ENCODE measurements at regions of chr10 and their contacts with region 1.

Region 1: GRCh38 chr10:113300617-113301016 is 252.2 kb upstream of the HABP2 start:
- DNase-seq: no peak
- H3K4me3 ChIP-seq: no peak overlapping the region
- H3K27ac ChIP-seq: no peak overlapping the region
- H3K4me1 ChIP-seq: no peaks in the 10 kb centered on the region; a peak in 1 of 7 replicates
- H3K27me3 ChIP-seq: no peaks in the 10 kb centered on the region
- CTCF ChIP-seq: no peak
- EP300 ChIP-seq: no peak
- POLR2A ChIP-seq: no peak
- RAD21 ChIP-seq: no peak

Region 2: GRCh38 chr10:113216102-113216501 is 84.5 kb before region 1 on chr10:
- CTCF ChIA-PET with region 1: interaction called, 17 read pairs
- POLR2A ChIA-PET with region 1: no interaction called
- DNase-seq: no peak
- H3K4me3 ChIP-seq: no peak overlapping the region
- H3K27ac ChIP-seq: no peak overlapping the region
- H3K4me1 ChIP-seq: no peaks in the 10 kb centered on the region; a peak in 1 of 7 replicates
- H3K27me3 ChIP-seq: no peaks in the 10 kb centered on the region
- CTCF ChIP-seq: peak in 2 of 3 experiments; percentile 42 to 65; a peak in 3 of 4 replicates
- EP300 ChIP-seq: no peak
- POLR2A ChIP-seq: no peak
- RAD21 ChIP-seq: peak; percentile 75 to 80

Region 3: GRCh38 chr10:113247050-113247790 is 53.4 kb before region 1 on chr10:
- CTCF ChIA-PET with region 1: interaction called, 12 read pairs
- POLR2A ChIA-PET with region 1: no interaction called
- DNase-seq: no peak
- H3K4me3 ChIP-seq: no peak overlapping the region
- H3K27ac ChIP-seq: no peak overlapping the region
- H3K4me1 ChIP-seq: no peaks in the 10 kb centered on the region; a peak in 1 of 7 replicates
- H3K27me3 ChIP-seq: no peaks in the 10 kb centered on the region
- CTCF ChIP-seq: no peak
- EP300 ChIP-seq: no peak
- POLR2A ChIP-seq: no peak
- RAD21 ChIP-seq: no peak